WTC11 (cell line): ENCODE measurements at regions of chr6 and their contacts with region 1.

Region 1: GRCh38 chr6:169701954-169702839 is at the starts of genes C6orf120 and WDR27:
- DNase-seq: peak; percentile 94
- ATAC-seq: peak; percentile 82
- H3K4me3 Mint-ChIP-seq: peak within 1 kb of the TSS; percentile 90
- H3K27ac Mint-ChIP-seq: peak within 1 kb of the TSS; percentile 93
- H3K4me1 Mint-ChIP-seq: peaks cover 29% of the 10 kb centered on the region
- H3K27me3 Mint-ChIP-seq: no peaks in the 10 kb centered on the region
- CTCF ChIP-seq: no peak
- total RNA-seq, gene C6orf120: 34.5 to 37.8 TPM (median 37.0 TPM) in 3 replicates
- total RNA-seq, gene WDR27: 83.4 to 126 TPM (median 90.6 TPM) in 3 replicates

Region 2: GRCh38 chr6:169723200-169723909 is 21.2 kb after region 1 on chr6:
- CTCF ChIA-PET with region 1: interaction called, 4 read pairs
- POLR2A ChIA-PET with region 1: interaction called, 14 read pairs
- DNase-seq: peak; percentile 57
- ATAC-seq: peak; percentile 9
- H3K4me3 Mint-ChIP-seq: peak overlapping the region; percentile 93
- H3K27ac Mint-ChIP-seq: peak overlapping the region; percentile 63; the same call in 1 of the 2 replicates
- H3K4me1 Mint-ChIP-seq: peaks cover 40% of the 10 kb centered on the region
- H3K27me3 Mint-ChIP-seq: peaks cover 8% of the 10 kb centered on the region
- CTCF ChIP-seq: no peak

Region 3: DNA sequence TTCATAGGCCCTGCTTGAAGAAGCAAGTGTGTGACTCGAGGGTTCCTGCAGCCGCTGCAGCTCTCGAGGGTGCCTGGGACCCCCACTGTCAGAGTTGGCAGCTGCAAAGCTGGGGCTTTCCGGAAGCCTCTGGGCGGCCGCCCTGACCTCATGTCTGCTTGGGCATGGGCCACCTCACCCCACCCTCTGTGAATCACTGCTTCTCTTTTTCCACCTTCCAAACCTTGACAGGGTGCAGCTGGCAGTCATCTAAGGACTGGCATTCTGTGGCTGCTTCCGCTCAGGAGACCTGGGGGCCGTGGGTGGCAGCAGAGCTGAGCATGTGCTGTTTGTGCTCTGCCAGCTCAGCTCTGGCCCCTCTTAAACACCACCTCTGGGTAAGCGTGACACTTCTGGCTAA is 81.2 kb after region 1 on chr6:
- CTCF ChIA-PET with region 1: no interaction called
- POLR2A ChIA-PET with region 1: no interaction called
- DNase-seq: no peak
- ATAC-seq: no peak
- H3K4me3 Mint-ChIP-seq: no peak overlapping the region
- H3K27ac Mint-ChIP-seq: no peak overlapping the region
- H3K4me1 Mint-ChIP-seq: no peaks in the 10 kb centered on the region
- H3K27me3 Mint-ChIP-seq: no peaks in the 10 kb centered on the region
- CTCF ChIP-seq: no peak